ENCODE measurements at regions of chr22 and their contacts with region 1.

Region 1: GRCh38 chr22:39532215-39533071 is at the start of gene RPS19BP1:
- DNase-seq: peak; percentile 96
- H3K4me3 ChIP-seq: peak within 1 kb of the TSS; percentile 96
- CTCF ChIP-seq: no peak

Region 2: GRCh38 chr22:39170825-39171622 is 361.4 kb before region 1 on chr22:
- CTCF ChIA-PET with region 1: interaction called, 41 read pairs
- POLR2A ChIA-PET with region 1: interaction called, 3 read pairs
- DNase-seq: no peak
- H3K4me3 ChIP-seq: no peak overlapping the region
- CTCF ChIP-seq: peak; percentile 95

Region 3: GRCh38 chr22:39343259-39344048 is 189.0 kb before region 1 on chr22:
- CTCF ChIA-PET with region 1: interaction called, 10 read pairs
- POLR2A ChIA-PET with region 1: interaction called, 3 read pairs
- DNase-seq: no peak
- H3K4me3 ChIP-seq: no peak overlapping the region
- CTCF ChIP-seq: peak; percentile 88

Region 4: DNA sequence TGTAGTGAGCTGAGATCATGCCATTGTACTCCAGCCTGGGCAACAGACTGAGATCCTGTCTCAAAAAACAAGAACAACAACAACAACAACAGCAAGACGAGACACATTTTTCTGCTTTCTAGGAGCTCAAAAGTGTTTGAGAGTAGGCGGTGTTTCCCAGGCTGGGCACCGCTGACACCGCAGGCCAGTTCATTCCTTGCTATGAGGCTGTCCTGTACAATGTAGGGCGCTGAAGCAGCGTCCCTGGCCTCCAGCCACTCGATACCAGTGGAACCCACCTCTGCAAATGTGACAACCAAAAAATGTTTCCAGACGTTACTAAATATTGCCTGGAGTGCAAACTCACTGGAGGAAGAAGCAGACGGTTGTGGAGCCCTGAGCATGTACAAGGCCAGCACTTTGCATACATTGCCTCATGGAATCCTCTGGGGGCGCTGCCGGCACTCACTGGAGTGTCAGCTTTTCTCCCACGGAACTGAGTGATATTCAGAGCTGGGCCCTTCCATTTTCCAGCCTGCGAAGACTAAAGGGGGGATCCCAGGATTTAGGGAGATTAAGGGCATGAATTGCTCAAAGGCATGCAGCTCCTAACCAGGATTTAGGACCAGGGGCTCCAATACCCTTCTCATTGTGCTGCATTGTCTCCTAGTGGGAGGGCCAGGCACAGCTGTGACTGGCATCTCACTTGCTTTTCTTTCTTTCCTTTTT is 36.2 kb before region 1 on chr22:
- CTCF ChIA-PET with region 1: interaction called, 222 read pairs
- POLR2A ChIA-PET with region 1: interaction called, 10 read pairs
- DNase-seq: no peak
- H3K4me3 ChIP-seq: no peak overlapping the region
- CTCF ChIP-seq: peak; percentile 81

Region 5: GRCh38 chr22:39520054-39520891 is 12.2 kb before region 1 on chr22 and contains the start of gene ATF4:
- CTCF ChIA-PET with region 1: interaction called, 71 read pairs
- POLR2A ChIA-PET with region 1: interaction called, 17 read pairs
- DNase-seq: peak; percentile 98
- H3K4me3 ChIP-seq: peak within 1 kb of the TSS; percentile 94
- CTCF ChIP-seq: no peak

Region 6: GRCh38 chr22:40009292-40009769 is 476.9 kb after region 1 on chr22:
- CTCF ChIA-PET with region 1: interaction called, 14 read pairs
- POLR2A ChIA-PET with region 1: no interaction called
- DNase-seq: no peak
- H3K4me3 ChIP-seq: no peak overlapping the region
- CTCF ChIP-seq: no peak

Region 7: DNA sequence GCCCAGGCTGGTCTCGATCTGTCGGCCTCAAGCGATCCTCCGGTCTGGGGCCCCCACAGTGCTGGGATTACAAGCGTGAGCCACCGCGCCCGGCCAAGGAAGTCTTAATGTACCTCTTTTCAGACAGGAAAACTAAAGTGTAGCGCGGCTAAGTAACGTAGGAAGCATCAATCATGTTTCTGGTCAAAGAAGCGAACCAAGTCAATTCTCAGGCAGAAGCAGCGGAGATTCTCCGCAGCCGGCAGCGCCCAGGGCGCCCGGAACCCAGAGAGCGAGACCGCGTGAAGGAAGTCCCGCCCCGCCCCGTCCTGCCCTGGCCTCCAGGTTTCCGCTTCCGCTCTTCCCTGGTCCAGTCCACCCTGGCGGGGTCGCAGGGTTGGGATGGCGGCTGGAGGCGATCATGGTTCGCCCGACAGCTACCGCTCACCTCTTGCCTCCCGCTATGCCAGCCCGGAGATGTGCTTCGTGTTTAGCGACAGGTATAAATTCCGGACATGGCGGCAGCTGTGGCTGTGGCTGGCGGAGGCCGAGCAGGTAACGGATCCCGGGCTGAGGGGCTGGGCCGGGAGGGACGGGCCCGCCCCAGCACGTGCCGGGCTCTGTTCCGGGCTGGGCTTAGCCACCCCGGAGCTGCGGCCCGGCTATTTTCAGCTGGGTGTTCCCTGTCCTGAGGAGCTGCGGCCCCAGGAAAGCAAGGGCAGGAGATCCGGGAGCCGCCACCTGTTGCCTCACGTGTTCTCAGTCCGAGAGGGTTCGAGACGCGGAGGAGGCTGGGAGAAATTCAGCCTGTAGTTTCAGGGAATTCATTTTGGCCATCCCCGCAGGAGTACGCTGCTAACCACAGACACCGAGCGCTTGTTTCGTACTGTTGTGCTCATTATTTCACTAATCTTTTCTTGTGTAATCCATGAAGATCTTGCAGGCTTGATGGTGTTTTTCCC is 814.0 kb after region 1 on chr22 and contains the start of gene ADSL:
- CTCF ChIA-PET with region 1: interaction called, 23 read pairs
- POLR2A ChIA-PET with region 1: no interaction called
- DNase-seq: no peak
- H3K4me3 ChIP-seq: peak within 1 kb of the TSS; percentile 99
- CTCF ChIP-seq: peak; percentile 39

Measured in AG04449 (cell line).